HAP-1 (cell line): ENCODE measurements at regions of chr6 and their contacts with region 1.

Region 1: GRCh38 chr6:158704181-158704822 is 54.4 kb downstream of the SYTL3 start:
- DNase-seq: peak; percentile 70 to 91
- H3K4me3 ChIP-seq: peak overlapping the region; percentile 16
- H3K4me1 ChIP-seq: peaks cover 3% of the 10 kb centered on the region
- H3K27me3 ChIP-seq: no peaks in the 10 kb centered on the region

Region 2: DNA sequence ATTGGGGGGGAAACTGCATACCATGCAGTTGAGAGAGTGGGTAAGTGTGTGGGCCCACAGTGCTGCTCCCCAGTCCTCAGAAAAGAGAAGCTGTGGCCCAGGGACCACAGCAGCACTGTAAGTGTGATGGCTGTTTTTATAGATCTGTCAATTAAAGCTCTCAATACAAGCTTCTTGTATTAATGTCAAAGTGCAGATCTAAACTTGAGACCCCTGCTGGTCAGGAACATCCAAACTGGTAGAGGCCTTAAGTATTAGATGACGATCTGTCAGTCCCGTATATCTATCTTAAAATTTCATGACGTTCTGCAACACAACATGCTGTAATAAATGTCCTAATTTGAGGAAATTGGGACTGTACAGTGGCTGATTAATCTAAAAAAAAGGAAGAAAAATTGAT is 317.3 kb before region 1 on chr6:
- in situ Hi-C with region 1: no loop called
- DNase-seq: no peak
- H3K4me3 ChIP-seq: no peak overlapping the region
- H3K4me1 ChIP-seq: no peaks in the 10 kb centered on the region
- H3K27me3 ChIP-seq: no peaks in the 10 kb centered on the region

Region 3: DNA sequence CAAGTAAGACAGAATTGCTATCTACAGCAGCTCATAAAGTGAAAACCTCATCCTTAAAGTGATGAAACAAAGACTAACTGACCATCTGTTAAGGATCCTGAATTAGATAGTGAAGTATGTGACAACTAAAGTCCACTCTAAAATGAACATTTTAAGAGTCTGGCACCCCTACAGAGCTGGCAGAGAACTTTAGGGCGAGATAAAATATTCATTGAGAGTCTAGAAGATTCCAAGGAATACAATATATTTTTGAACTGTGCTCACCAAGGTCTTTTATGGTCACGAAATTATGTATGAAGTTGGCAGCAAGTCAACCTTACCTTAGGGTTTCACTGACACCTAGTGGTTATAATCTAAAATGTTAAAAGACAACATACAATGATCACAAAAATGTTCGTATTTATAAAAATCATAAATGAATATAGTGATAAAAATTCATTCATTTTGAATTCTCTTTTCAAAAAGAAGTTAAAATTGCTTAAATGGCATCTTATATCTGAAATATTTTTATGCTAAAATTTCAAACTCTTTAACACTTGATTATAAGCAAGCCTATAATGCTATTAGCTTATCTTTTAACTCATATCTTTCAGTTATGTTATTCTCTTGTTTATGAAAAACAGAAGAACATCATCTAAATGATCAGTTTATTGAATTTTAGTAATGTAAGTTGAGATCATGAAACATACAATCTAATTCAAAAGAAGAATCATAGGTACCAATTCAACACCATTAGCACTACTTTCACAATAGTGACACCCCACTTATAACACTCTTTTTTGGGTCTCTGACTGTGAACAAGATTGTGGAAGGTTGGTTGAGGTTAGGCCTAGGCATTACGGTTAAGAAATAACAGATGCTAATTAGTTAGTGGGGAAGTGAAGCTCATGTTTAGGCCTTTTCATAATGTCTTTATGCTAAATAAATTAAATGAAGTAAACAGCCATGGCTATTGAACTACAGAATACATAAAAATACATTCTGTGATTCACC is 268.2 kb after region 1 on chr6:
- in situ Hi-C with region 1: loop called (anchors 10 kb)
- DNase-seq: peak in 1 of 2 experiments; percentile 81
- H3K4me3 ChIP-seq: no peak overlapping the region
- H3K4me1 ChIP-seq: no peaks in the 10 kb centered on the region
- H3K27me3 ChIP-seq: no peaks in the 10 kb centered on the region

Region 4: GRCh38 chr6:159104163-159104925 is 400.0 kb after region 1 on chr6:
- in situ Hi-C with region 1: loop called (anchors 25 kb)
- DNase-seq: peak; percentile 55 to 77
- H3K4me3 ChIP-seq: no peak overlapping the region
- H3K4me1 ChIP-seq: 0 out of 2 replicates have a peak, but pooled peaks cover 4% of the 10 kb centered on the region
- H3K27me3 ChIP-seq: no peaks in the 10 kb centered on the region